T-cell (primary cell): ENCODE measurements at regions of chr20 and their contacts with region 1.

Region 1: GRCh38 chr20:38842558-38842981 is 37.1 kb downstream of the PPP1R16B start:
- DNase-seq: peak in 25 of 35 experiments; percentile 13 to 64 (median 30)
- ATAC-seq: peak; percentile 52 to 58 (median 54)
- H3K4me3 ChIP-seq: peak overlapping the region in 1 of 2 donors; percentile 9
- H3K4me3 Mint-ChIP-seq: peak overlapping the region; percentile 15 to 61 (median 50)
- H3K27ac ChIP-seq: peak overlapping the region; percentile 98
- H3K27ac Mint-ChIP-seq: peak overlapping the region; percentile 92 to 96
- H3K4me1 ChIP-seq: peaks cover 24 to 59% of the 10 kb centered on the region in 2 experiments
- H3K4me1 Mint-ChIP-seq: peaks cover 75 to 88% (median 82%) of the 10 kb centered on the region in 3 donors
- H3K27me3 ChIP-seq: no peaks in the 10 kb centered on the region
- H3K27me3 Mint-ChIP-seq: no peaks in the 10 kb centered on the region

Region 2: GRCh38 chr20:38790200-38791053 is 52.1 kb before region 1 on chr20:
- CTCF ChIA-PET with region 1: no interaction called
- POLR2A ChIA-PET with region 1: interaction called in 1 of 2 experiments, 10 read pairs
- DNase-seq: peak in 25 of 35 experiments; percentile 20 to 77 (median 41)
- ATAC-seq: peak; percentile 55 to 95 (median 60)
- H3K4me3 ChIP-seq: no peak overlapping the region
- H3K4me3 Mint-ChIP-seq: peak overlapping the region in 1 of 3 donors; percentile 34
- H3K27ac ChIP-seq: no peak overlapping the region
- H3K27ac Mint-ChIP-seq: no peak overlapping the region
- H3K4me1 ChIP-seq: peaks cover 0 to 9% of the 10 kb centered on the region in 2 experiments
- H3K4me1 Mint-ChIP-seq: peaks cover 7 to 10% (median 7%) of the 10 kb centered on the region in 3 donors
- H3K27me3 ChIP-seq: peaks cover 0 to 2% of the 10 kb centered on the region in 2 experiments
- H3K27me3 Mint-ChIP-seq: no peaks in the 10 kb centered on the region

Region 3: GRCh38 chr20:38805502-38805957 is 37.0 kb before region 1 on chr20 and contains the start of gene PPP1R16B:
- CTCF ChIA-PET with region 1: interaction called in 1 of 2 experiments, 6 read pairs
- POLR2A ChIA-PET with region 1: interaction called, 9 to 17 read pairs
- DNase-seq: peak; percentile 64 to 86 (median 79)
- ATAC-seq: peak; percentile 66 to 75 (median 72)
- H3K4me3 ChIP-seq: peak within 1 kb of the TSS; percentile 86 to 99
- H3K4me3 Mint-ChIP-seq: peak within 1 kb of the TSS; percentile 88 to 91 (median 91)
- H3K27ac ChIP-seq: peak within 1 kb of the TSS; percentile 99
- H3K27ac Mint-ChIP-seq: peak within 1 kb of the TSS; percentile 97
- H3K4me1 ChIP-seq: peaks cover 27 to 59% of the 10 kb centered on the region in 2 experiments
- H3K4me1 Mint-ChIP-seq: peaks cover 54 to 56% (median 56%) of the 10 kb centered on the region in 3 donors
- H3K27me3 ChIP-seq: no peaks in the 10 kb centered on the region
- H3K27me3 Mint-ChIP-seq: no peaks in the 10 kb centered on the region
- total RNA-seq, gene PPP1R16B: 32.0 to 58.5 (median 50.2) TPM

Region 4: DNA sequence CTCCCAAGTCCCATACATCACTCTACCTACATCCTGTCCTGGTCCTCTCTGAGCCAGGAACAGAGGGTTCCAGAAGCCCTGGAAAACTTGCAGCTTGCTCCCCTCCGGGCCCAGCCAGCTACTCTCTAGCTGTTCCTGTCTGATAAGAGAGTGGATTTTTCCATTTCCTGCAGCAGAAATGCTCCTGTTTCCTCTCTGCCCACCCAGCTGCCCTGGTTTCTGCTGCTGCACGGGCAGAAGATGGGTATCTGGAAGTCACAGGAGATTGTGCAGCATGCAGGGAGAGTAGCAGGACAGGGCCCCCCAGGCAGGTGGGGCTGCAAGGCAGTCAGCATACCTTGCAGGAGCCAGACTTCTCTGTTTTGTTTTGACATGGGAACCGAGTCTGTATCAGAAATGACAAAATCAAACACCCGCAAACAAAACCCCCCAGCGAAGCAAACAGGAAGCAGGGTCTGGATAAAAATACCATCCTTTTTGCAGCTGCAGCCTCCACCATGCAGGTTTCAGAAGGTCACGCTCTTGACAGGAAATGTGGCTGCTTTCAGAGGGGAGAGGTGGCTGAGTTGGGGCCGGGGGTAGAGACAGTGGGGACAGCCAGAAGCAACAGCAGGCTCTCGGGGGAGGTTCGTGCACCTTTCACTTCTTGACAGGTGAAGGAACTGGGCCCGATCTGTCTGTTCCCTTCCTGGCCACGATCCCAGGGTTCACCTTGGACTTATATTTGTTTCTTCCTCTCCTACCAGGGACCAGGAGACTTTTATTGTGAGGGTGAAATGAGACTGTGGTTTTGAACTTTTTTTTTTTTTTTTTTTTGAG is 32.8 kb after region 1 on chr20:
- CTCF ChIA-PET with region 1: interaction called in 1 of 2 experiments, 41 read pairs
- POLR2A ChIA-PET with region 1: interaction called, 3 to 79 read pairs
- DNase-seq: peak; percentile 50 to 85 (median 71)
- ATAC-seq: peak; percentile 65 to 72 (median 72)
- H3K4me3 ChIP-seq: peak overlapping the region; percentile 35 to 55
- H3K4me3 Mint-ChIP-seq: peak overlapping the region; percentile 76 to 84 (median 77)
- H3K27ac ChIP-seq: peak overlapping the region; percentile 94
- H3K27ac Mint-ChIP-seq: peak overlapping the region; percentile 90 to 96
- H3K4me1 ChIP-seq: peaks cover 40 to 64% of the 10 kb centered on the region in 2 experiments
- H3K4me1 Mint-ChIP-seq: peaks cover 94 to 98% (median 95%) of the 10 kb centered on the region in 3 donors
- H3K27me3 ChIP-seq: no peaks in the 10 kb centered on the region
- H3K27me3 Mint-ChIP-seq: no peaks in the 10 kb centered on the region

Region 5: GRCh38 chr20:38893565-38894090 is 51.1 kb after region 1 on chr20:
- CTCF ChIA-PET with region 1: interaction called, 9 to 20 read pairs
- POLR2A ChIA-PET with region 1: interaction called in 1 of 2 experiments, 10 read pairs
- DNase-seq: peak; percentile 54 to 90 (median 76)
- ATAC-seq: peak; percentile 83 to 89 (median 86)
- H3K4me3 ChIP-seq: peak overlapping the region in 1 of 2 donors; percentile 20
- H3K4me3 Mint-ChIP-seq: peak overlapping the region; percentile 10 to 61 (median 50)
- H3K27ac ChIP-seq: peak overlapping the region; percentile 84
- H3K27ac Mint-ChIP-seq: peak overlapping the region; percentile 96
- H3K4me1 ChIP-seq: peaks cover 4 to 30% of the 10 kb centered on the region in 2 experiments
- H3K4me1 Mint-ChIP-seq: peaks cover 26 to 42% (median 34%) of the 10 kb centered on the region in 3 donors
- H3K27me3 ChIP-seq: no peaks in the 10 kb centered on the region
- H3K27me3 Mint-ChIP-seq: no peaks in the 10 kb centered on the region